Prostate gland (tissue), 2 donors: ENCODE measurements at regions of chr6 and their contacts with region 1.

Region 1: DNA sequence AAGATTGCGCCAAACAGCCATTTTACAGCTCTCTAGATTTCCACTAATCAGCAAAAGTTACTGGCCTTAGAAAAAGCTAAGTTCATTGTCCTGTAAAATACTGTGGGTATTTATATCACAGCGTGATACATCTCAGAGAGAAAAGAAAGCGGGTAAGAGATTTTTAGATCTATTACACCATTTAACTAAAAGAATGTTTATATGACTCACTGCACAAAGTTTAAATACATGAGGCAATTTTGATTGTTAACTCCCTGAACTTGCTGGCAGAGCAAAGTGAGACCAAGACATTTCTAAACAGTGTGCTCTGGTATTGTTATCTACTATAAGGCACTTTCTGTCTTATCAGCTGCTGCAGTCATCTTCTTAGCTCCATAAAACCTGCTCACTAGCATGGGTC is 314.3 kb downstream of the EPHA7 start:
- DNase-seq: no peak
- H3K4me3 ChIP-seq: no peak overlapping the region
- H3K27ac ChIP-seq: no peak overlapping the region
- H3K4me1 ChIP-seq: no peaks in the 10 kb centered on the region
- H3K27me3 ChIP-seq: no peaks in the 10 kb centered on the region
- CTCF ChIP-seq: no peak
- POLR2A ChIP-seq: no peak

Region 2: GRCh38 chr6:92962846-92963245 is 142.2 kb before region 1 on chr6:
- intact Hi-C with region 1: no loop called
- DNase-seq: no peak
- H3K4me3 ChIP-seq: no peak overlapping the region
- H3K27ac ChIP-seq: no peak overlapping the region
- H3K4me1 ChIP-seq: no peaks in the 10 kb centered on the region
- H3K27me3 ChIP-seq: no peaks in the 10 kb centered on the region
- CTCF ChIP-seq: no peak
- POLR2A ChIP-seq: no peak

Region 3: DNA sequence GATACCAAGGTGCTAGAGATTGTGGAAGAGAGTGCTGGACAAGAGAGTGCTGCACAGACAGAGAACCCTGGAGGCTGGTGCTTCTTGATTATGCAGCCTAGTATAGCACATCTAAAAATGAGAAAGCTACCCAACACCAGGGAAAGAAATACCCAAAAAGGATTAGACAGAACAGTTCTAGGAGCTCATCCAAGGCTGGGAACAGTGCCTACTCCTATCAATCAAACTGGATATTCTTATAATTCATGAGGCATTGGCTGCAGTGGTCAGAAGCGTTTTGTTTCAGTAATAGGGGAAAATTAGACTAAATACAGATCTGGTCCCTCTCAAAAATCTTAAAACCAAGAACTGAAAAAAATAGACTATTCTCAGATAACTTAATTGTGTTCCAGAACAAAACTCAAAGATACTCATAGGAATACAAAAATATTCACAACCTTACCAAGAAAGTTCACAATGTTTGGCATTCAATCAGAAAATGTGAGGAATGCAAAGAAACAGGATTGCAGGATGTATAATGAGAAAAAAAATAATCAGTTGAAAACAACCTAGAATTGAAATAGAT is 91.5 kb after region 1 on chr6:
- intact Hi-C with region 1: loop called (anchors 10 kb)
- DNase-seq: no peak
- H3K4me3 ChIP-seq: no peak overlapping the region
- H3K27ac ChIP-seq: no peak overlapping the region
- H3K4me1 ChIP-seq: no peaks in the 10 kb centered on the region
- H3K27me3 ChIP-seq: no peaks in the 10 kb centered on the region
- CTCF ChIP-seq: no peak
- POLR2A ChIP-seq: no peak